Adrenal gland (tissue), 19 donors: ENCODE measurements at regions of chr1 and their contacts with region 1.

Region 1: DNA sequence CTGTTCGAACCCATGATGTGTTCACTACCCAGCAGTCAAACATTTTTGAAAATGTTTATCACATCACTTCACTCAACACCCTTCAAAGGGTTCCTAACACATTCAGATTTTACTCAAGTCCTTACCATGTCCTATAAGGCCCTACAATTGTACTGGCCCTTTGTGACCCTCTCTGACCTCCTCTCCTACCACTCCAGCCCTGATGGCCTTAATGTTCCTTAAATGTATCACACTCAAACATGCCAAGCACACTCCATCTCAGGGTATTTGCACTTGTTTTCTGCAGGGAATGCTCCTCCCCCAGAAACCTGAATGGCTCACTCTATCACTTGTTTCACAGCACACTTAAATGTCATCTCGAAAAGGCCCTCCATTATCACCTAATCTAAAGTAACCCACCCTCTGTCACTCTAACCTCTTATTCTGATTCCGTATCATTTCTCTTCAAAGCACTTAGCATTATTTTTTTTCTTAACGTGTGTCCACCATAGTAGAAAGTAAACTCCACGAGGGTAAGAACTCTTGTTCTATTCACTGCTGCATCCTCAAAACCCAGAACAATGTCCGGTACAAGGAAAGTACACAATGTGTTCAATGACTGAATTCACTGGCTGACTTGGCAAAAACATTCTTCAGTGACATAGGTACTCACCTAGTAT is 7.3 kb downstream of the ARID4B start:
- DNase-seq: no peak
- H3K4me3 ChIP-seq: no peak overlapping the region
- H3K27ac ChIP-seq: no peak overlapping the region
- H3K4me1 ChIP-seq: peaks cover 14 to 52% of the 10 kb centered on the region in 2 donors
- H3K27me3 ChIP-seq: no peaks in the 10 kb centered on the region
- CTCF ChIP-seq: no peak
- POLR2A ChIP-seq: no peak

Region 2: DNA sequence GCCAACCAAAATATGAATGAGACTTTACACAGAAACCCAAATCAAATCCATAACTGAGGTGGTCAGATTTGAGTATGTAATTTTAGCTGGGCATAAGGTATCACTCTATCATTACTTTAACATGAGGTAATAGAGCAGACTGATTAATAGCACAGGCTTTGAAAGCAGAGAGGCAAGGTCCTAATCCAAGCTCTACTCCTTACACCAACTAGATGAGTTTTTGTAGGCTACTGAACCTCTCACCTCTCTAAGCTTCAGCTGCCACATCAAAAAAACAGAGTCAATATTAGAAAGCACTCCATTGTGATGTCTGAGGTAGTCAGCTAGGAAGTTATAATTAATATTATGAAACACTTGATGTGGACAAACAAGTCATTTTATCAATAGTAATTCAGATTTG is 56.3 kb before region 1 on chr1:
- intact Hi-C with region 1: loop called in 1 of 2 experiments (anchors 5 kb)
- DNase-seq: no peak
- H3K4me3 ChIP-seq: no peak overlapping the region
- H3K27ac ChIP-seq: no peak overlapping the region
- H3K4me1 ChIP-seq: peaks cover 0 to 38% of the 10 kb centered on the region in 2 donors
- H3K27me3 ChIP-seq: no peaks in the 10 kb centered on the region
- CTCF ChIP-seq: no peak
- POLR2A ChIP-seq: no peak